ENCODE measurements at regions of chr17 and their contacts with region 1.

Region 1: DNA sequence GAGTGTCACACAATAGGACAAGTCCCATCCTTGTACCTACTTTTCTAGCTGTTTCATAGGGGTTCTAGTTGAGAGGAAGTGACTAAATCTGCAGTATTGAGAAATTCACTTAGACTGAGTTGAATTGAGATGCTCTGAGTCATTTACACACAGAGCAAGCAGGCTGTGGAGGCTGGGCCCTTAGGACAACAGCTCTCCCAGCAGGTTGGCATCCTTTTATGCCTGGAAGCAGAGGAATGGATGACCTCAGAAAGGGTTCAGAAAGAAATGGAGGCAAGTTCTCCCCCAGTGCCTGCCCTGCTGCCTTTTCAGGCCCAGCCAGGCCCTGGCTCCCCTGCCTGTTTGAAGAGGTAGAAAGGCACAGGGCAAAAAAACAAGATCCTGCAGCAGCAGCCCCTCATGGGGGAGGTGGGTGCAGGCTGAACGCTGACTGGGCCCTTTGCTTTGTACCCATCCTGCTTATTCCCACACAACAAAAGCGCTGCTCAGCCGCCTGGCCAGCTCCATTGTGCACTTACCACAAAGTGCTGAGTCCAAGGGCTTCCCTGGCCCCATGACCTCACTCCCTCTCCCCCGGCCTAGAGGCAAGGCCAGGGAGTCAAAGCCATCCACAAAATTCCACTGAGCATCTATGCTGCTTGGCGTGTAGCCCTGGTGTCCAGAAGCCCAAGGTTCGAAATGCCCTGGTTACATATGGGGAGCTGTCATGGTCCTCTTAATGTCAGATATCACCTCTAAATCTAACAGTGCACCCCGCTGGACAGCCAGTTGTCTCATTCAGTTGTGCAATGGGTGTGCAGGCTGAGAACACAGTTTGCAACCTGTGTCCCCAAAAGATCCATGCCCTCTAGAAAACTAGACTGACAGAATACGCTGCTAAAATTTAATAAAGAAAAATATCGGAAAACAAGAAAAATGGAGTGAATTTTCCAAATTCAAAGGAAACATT is 5.4 kb upstream of the CRYBA1 start:
- DNase-seq: peak; percentile 68 to 92
- H3K4me3 ChIP-seq: no peak overlapping the region
- H3K27ac ChIP-seq: peak overlapping the region; percentile 66 to 86
- H3K4me1 ChIP-seq: peaks cover 9 to 19% of the 10 kb centered on the region in 2 donors
- H3K27me3 ChIP-seq: no peaks in the 10 kb centered on the region
- CTCF ChIP-seq: no peak

Region 2: GRCh38 chr17:29256735-29257466 is 15.6 kb after region 1 on chr17:
- intact Hi-C with region 1: loop called (anchors 1 kb)
- DNase-seq: no peak
- H3K4me3 ChIP-seq: peak overlapping the region; percentile 1 to 11
- H3K27ac ChIP-seq: peak overlapping the region; percentile 48 to 52
- H3K4me1 ChIP-seq: peaks cover 16 to 45% of the 10 kb centered on the region in 2 donors
- H3K27me3 ChIP-seq: no peaks in the 10 kb centered on the region
- CTCF ChIP-seq: no peak